Mammary epithelial cell (primary cell): ENCODE measurements at regions of chr10 and their contacts with region 1.

Region 1: GRCh38 chr10:78475437-78475836 is 441.8 kb downstream of the RPS24 start:
- DNase-seq: no peak
- H3K4me3 ChIP-seq: no peak overlapping the region
- H3K27ac ChIP-seq: no peak overlapping the region
- H3K4me1 ChIP-seq: no peaks in the 10 kb centered on the region
- H3K27me3 ChIP-seq: peaks cover 2% of the 10 kb centered on the region
- CTCF ChIP-seq: no peak

Region 2: DNA sequence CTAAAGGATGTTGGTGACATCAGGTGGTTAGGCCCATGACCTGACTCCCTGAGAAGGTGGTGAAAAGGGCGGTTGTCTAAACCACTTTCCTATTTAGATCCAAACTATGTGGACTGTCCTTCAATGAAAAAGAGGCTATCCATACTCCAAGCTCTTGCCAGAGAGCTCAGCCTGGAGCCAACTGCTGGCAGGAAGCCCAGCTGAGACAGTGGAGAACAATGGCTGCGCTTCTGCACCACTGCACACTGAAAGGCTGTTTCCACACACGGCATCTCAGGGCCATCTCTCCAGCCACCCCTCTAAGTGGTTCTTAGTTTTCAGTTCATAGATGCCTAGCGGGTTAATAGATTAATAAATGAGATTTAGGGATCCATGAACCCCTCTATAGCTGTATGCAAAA is 104.6 kb after region 1 on chr10:
- CTCF ChIA-PET with region 1: no interaction called
- dilution Hi-C with region 1: loop called (anchors 5 kb)
- in situ Hi-C with region 1: no loop called
- intact Hi-C with region 1: no loop called
- DNase-seq: no peak
- H3K4me3 ChIP-seq: no peak overlapping the region
- H3K27ac ChIP-seq: no peak overlapping the region
- H3K4me1 ChIP-seq: no peaks in the 10 kb centered on the region
- H3K27me3 ChIP-seq: no peaks in the 10 kb centered on the region
- CTCF ChIP-seq: no peak

Region 3: DNA sequence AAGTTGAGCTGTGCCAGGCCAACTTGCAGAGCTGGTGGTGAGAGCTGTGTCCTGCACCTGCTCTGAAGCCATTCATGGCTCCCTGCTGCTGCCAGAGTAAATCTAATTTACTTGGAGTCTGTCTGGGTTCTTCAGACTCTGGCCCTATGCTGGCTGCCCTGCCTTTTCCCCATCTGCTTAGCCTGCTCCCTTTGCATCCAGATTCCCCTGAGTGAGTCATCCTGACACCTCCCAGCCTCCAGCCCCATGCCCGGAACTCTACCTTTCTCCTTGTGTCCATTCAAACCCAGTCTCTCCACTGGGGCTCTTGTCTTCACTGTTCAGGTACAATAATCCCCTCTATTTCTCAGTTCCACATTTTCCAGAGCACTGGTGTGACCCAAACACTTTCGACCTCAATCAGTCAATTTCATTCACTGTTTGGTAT is 159.0 kb after region 1 on chr10:
- CTCF ChIA-PET with region 1: no interaction called
- dilution Hi-C with region 1: no loop called
- in situ Hi-C with region 1: no loop called
- intact Hi-C with region 1: no loop called
- DNase-seq: peak; percentile 28
- H3K4me3 ChIP-seq: no peak overlapping the region
- H3K27ac ChIP-seq: no peak overlapping the region
- H3K4me1 ChIP-seq: no peaks in the 10 kb centered on the region
- H3K27me3 ChIP-seq: peaks cover 2% of the 10 kb centered on the region
- CTCF ChIP-seq: no peak